WTC11 (cell line): ENCODE measurements at regions of chr19 and their contacts with region 1.

Region 1: GRCh38 chr19:47019431-47020041 is at the start of gene NPAS1:
- DNase-seq: peak; percentile 54
- ATAC-seq: peak; percentile 61
- H3K4me3 Mint-ChIP-seq: peak within 1 kb of the TSS; percentile 65
- H3K27ac Mint-ChIP-seq: no peak within 1 kb of the TSS
- H3K4me1 Mint-ChIP-seq: peaks cover 10% of the 10 kb centered on the region
- H3K27me3 Mint-ChIP-seq: peaks cover 78% of the 10 kb centered on the region
- CTCF ChIP-seq: no peak
- total RNA-seq, gene NPAS1: 6.8 to 11.1 TPM (median 10.3 TPM) in 3 replicates

Region 2: GRCh38 chr19:46875234-46875633 is 144.3 kb before region 1 on chr19:
- CTCF ChIA-PET with region 1: no interaction called
- POLR2A ChIA-PET with region 1: no interaction called
- DNase-seq: no peak
- ATAC-seq: peak; percentile 48
- H3K4me3 Mint-ChIP-seq: no peak overlapping the region
- H3K27ac Mint-ChIP-seq: peak overlapping the region; percentile 98
- H3K4me1 Mint-ChIP-seq: peaks cover 9% of the 10 kb centered on the region
- H3K27me3 Mint-ChIP-seq: no peaks in the 10 kb centered on the region
- CTCF ChIP-seq: no peak

Region 3: GRCh38 chr19:47035127-47036096 is 15.9 kb after region 1 on chr19:
- CTCF ChIA-PET with region 1: interaction called, 36 read pairs
- POLR2A ChIA-PET with region 1: no interaction called
- DNase-seq: peak; percentile 97
- ATAC-seq: peak; percentile 86
- H3K4me3 Mint-ChIP-seq: peak overlapping the region; percentile 88
- H3K27ac Mint-ChIP-seq: peak overlapping the region; percentile 87
- H3K4me1 Mint-ChIP-seq: peaks cover 18% of the 10 kb centered on the region
- H3K27me3 Mint-ChIP-seq: peaks cover 32% of the 10 kb centered on the region
- CTCF ChIP-seq: peak; percentile 98